Activated naive CD4-positive, alpha-beta T cell treated with anti-CD3 and anti-CD28 coated beads for 36 hours (primary cell): ENCODE measurements at regions of chrX and their contacts with region 1.

Region 1: DNA sequence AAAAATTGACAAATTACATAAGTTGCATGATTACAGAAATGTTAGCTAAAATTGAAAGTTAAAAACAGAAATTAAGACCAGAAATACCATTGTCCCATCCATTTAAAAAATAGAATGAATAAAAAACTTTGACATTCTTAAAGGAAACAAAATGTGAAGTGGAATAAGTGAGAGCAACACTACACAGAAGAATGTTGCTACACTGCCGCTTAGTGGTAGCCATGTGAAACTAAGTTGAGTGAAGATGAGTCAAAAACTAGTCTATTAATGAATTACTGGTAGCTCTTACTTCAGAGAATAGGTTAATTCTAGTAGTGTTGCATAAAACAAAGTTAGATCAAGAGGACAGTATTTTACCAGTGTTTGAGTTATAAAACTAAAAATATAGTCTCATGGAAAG is 571.0 kb upstream of the KLHL4 start:
- DNase-seq: peak; percentile 6
- H3K4me3 Mint-ChIP-seq: no peak overlapping the region
- H3K27ac Mint-ChIP-seq: no peak overlapping the region
- H3K4me1 Mint-ChIP-seq: no peaks in the 10 kb centered on the region
- H3K27me3 Mint-ChIP-seq: no peaks in the 10 kb centered on the region

Region 2: DNA sequence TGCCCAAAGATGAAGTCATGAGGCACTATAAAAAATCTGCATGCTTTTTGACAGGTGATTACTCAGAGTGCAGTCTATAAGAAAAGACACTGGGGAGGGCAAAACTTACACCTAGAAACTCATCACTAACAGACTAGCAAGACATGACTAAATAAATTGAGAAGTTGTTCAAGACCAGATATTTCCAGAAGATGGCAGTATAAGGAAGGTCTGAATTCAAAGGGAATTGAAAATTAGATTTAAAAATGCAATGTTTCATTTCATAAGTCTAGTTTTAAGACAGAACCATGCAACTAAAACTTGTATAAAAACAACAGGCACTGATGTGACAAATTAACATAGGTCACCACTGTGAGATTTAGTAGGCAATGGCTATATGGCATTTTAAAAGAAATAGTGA is 1334.6 kb before region 1 on chrX:
- CTCF ChIA-PET with region 1: no interaction called
- intact Hi-C with region 1: loop called (anchors 10 kb)
- DNase-seq: no peak
- H3K4me3 Mint-ChIP-seq: no peak overlapping the region
- H3K27ac Mint-ChIP-seq: no peak overlapping the region
- H3K4me1 Mint-ChIP-seq: no peaks in the 10 kb centered on the region
- H3K27me3 Mint-ChIP-seq: no peaks in the 10 kb centered on the region

Region 3: GRCh38 chrX:85851418-85851817 is 1095.2 kb before region 1 on chrX:
- CTCF ChIA-PET with region 1: no interaction called
- intact Hi-C with region 1: loop called (anchors 5 kb)
- DNase-seq: peak; percentile 25
- H3K4me3 Mint-ChIP-seq: no peak overlapping the region
- H3K27ac Mint-ChIP-seq: no peak overlapping the region
- H3K4me1 Mint-ChIP-seq: no peaks in the 10 kb centered on the region
- H3K27me3 Mint-ChIP-seq: peaks cover 1% of the 10 kb centered on the region

Region 4: GRCh38 chrX:86133761-86134160 is 812.8 kb before region 1 on chrX:
- CTCF ChIA-PET with region 1: no interaction called
- intact Hi-C with region 1: loop called (anchors 10 kb)
- DNase-seq: no peak
- H3K4me3 Mint-ChIP-seq: no peak overlapping the region
- H3K27ac Mint-ChIP-seq: no peak overlapping the region
- H3K4me1 Mint-ChIP-seq: peaks cover 2% of the 10 kb centered on the region
- H3K27me3 Mint-ChIP-seq: peaks cover 2% of the 10 kb centered on the region

Region 5: GRCh38 chrX:86964321-86964720 is 17.8 kb after region 1 on chrX:
- CTCF ChIA-PET with region 1: no interaction called
- intact Hi-C with region 1: no loop called
- DNase-seq: no peak
- H3K4me3 Mint-ChIP-seq: no peak overlapping the region
- H3K27ac Mint-ChIP-seq: no peak overlapping the region
- H3K4me1 Mint-ChIP-seq: no peaks in the 10 kb centered on the region
- H3K27me3 Mint-ChIP-seq: no peaks in the 10 kb centered on the region